Naive thymus-derived CD8-positive, alpha-beta T cell (primary cell): ENCODE measurements at regions of chr19 and their contacts with region 1.

Region 1: GRCh38 chr19:16542045-16542909 is at the start of gene CHERP:
- DNase-seq: peak; percentile 91 to 97 (median 94)
- ATAC-seq: peak; percentile 84 to 90
- H3K4me3 Mint-ChIP-seq: peak within 1 kb of the TSS; percentile 83 to 97 (median 90)
- H3K27ac Mint-ChIP-seq: peak within 1 kb of the TSS; percentile 81 to 97 (median 90)
- H3K4me1 Mint-ChIP-seq: peaks cover 33 to 71% (median 62%) of the 10 kb centered on the region in 4 donors
- H3K27me3 Mint-ChIP-seq: no peaks in the 10 kb centered on the region
- polyA plus RNA-seq, gene CHERP: 4.7 to 17.8 (median 8.6) TPM

Region 2: DNA sequence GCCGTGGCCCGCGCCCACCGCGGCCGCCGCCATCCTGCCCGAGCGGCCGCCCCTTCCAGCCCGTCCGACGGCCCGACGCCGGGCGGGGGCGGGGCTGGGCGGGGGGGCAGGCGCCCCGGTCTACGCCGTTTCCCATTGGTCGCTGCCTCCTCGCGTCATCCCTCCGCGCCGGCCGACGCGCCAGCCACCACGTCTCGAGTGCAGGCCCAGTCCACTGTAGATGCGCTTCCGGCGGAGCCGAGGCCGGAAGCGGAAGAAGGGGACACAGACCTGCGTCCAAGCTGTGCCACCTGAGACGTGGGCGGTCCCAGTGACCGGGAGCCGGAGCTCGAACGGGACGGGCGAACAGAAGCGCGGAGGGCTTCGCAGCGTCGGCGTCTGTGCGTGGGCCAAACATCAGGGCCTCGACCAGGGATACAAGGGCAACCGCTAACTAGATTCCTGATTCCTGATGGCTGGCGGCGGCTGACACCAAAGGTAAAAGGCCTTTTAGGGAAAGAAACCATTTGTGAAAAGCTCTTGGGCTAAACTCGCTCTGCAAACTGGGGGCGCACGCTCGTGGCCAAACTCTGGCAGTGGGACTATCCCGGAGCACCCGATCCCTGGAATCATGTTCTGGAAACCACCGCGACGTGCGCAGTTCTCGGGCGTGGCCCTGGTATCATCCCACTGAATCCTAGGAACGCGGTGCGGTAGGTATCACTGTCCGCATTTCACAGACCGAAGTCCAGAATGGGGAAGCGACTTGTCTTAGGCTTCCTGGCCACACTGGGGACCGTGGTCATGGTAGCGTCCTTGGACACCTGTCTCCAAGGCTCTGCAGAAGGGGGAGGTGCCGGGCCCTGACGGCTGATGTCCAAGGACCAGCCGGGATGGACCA is 30.3 kb after region 1 on chr19 and contains the start of gene SLC35E1:
- POLR2A ChIA-PET with region 1: interaction called, 11 read pairs
- DNase-seq: peak; percentile 83 to 95 (median 88)
- ATAC-seq: peak; percentile 89 to 92
- H3K4me3 Mint-ChIP-seq: peak within 1 kb of the TSS; percentile 93 to 99 (median 98)
- H3K27ac Mint-ChIP-seq: peak within 1 kb of the TSS; percentile 97 to 99 (median 99)
- H3K4me1 Mint-ChIP-seq: peaks cover 12 to 69% (median 52%) of the 10 kb centered on the region in 4 donors
- H3K27me3 Mint-ChIP-seq: no peaks in the 10 kb centered on the region
- polyA plus RNA-seq, gene SLC35E1: 13.6 to 22.3 (median 16.1) TPM